CD4-positive, alpha-beta memory T cell (primary cell): ENCODE measurements at regions of chr11 and their contacts with region 1.

Region 1: DNA sequence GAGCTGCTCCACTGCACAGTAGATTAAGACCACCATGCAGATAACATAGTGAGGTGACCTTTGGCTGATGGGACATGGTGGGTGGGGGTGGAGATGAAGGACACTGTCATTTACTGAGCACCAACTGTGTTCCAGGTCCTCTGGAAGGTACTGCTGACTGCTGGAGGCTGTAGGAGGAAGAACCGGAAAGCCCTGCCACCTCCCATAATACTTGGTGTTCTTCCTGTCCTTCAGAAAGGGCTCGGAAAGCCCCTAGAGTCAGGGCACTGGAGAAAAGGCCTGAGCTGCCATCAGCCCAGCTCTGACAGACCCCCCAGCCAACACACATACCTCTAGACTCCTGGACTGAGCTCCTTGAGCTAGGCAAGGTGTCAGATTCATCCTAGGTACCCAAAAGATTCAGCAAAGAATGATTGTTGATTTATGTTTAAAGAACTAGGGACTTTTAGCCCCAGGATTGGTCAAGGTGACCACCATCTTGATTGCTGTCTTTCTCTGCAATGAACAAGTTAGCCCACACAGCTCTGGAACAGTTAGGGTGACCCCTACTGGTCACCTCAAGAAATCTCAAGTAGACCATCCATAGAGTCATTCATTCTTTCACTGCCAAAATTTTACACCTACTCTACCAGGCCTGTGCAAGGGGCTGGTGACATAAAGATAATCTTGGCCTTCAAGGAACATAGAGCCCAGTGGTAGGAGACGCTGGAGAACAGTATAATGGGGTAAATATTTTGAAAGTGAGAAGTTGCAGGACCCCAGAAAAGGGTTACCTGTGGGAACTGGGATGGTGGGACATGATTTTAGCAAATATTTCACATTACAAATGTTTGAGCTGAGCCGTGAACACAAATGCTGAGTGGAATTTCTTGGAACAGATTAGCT is 39.4 kb downstream of the IRAG1 start:
- DNase-seq: peak in 4 of 5 donors; percentile 47 to 53 (median 50)
- H3K4me3 ChIP-seq: no peak overlapping the region
- H3K4me3 Mint-ChIP-seq: no peak overlapping the region
- H3K27ac ChIP-seq: no peak overlapping the region
- H3K27ac Mint-ChIP-seq: peak overlapping the region in 2 of 7 donors; percentile 16 to 41
- H3K4me1 ChIP-seq: no peaks in the 10 kb centered on the region
- H3K4me1 Mint-ChIP-seq: peaks cover 0 to 2% (median under 1%) of the 10 kb centered on the region in 4 donors
- H3K27me3 ChIP-seq: no peaks in the 10 kb centered on the region
- H3K27me3 Mint-ChIP-seq: no peaks in the 10 kb centered on the region

Region 2: GRCh38 chr11:10017911-10018310 is 636.3 kb before region 1 on chr11:
- CTCF ChIA-PET with region 1: no interaction called
- POLR2A ChIA-PET with region 1: no interaction called
- intact Hi-C with region 1: no loop called
- DNase-seq: no peak
- H3K4me3 ChIP-seq: no peak overlapping the region
- H3K4me3 Mint-ChIP-seq: no peak overlapping the region
- H3K27ac ChIP-seq: no peak overlapping the region
- H3K27ac Mint-ChIP-seq: no peak overlapping the region
- H3K4me1 ChIP-seq: peaks cover 8% of the 10 kb centered on the region
- H3K4me1 Mint-ChIP-seq: peaks cover 7 to 15% (median 13%) of the 10 kb centered on the region in 4 donors
- H3K27me3 ChIP-seq: no peaks in the 10 kb centered on the region
- H3K27me3 Mint-ChIP-seq: no peaks in the 10 kb centered on the region

Region 3: GRCh38 chr11:10400856-10401255 is 253.3 kb before region 1 on chr11:
- CTCF ChIA-PET with region 1: interaction called, 90 read pairs
- POLR2A ChIA-PET with region 1: no interaction called
- intact Hi-C with region 1: loop called (anchors 1 kb)
- DNase-seq: no peak
- H3K4me3 ChIP-seq: no peak overlapping the region
- H3K4me3 Mint-ChIP-seq: no peak overlapping the region
- H3K27ac ChIP-seq: no peak overlapping the region
- H3K27ac Mint-ChIP-seq: no peak overlapping the region
- H3K4me1 ChIP-seq: peaks cover 15% of the 10 kb centered on the region
- H3K4me1 Mint-ChIP-seq: peaks cover 10 to 19% (median 14%) of the 10 kb centered on the region in 4 donors
- H3K27me3 ChIP-seq: no peaks in the 10 kb centered on the region
- H3K27me3 Mint-ChIP-seq: peaks cover 0 to 4% of the 10 kb centered on the region in 2 donors

Region 4: GRCh38 chr11:10405855-10406592 is 248.1 kb before region 1 on chr11:
- CTCF ChIA-PET with region 1: interaction called, 260 read pairs
- POLR2A ChIA-PET with region 1: no interaction called
- intact Hi-C with region 1: loop called (anchors 1 kb)
- DNase-seq: peak in 4 of 5 donors; percentile 49 to 54 (median 51)
- H3K4me3 ChIP-seq: no peak overlapping the region
- H3K4me3 Mint-ChIP-seq: no peak overlapping the region
- H3K27ac ChIP-seq: no peak overlapping the region
- H3K27ac Mint-ChIP-seq: peak overlapping the region in 2 of 7 donors; percentile 32 to 58
- H3K4me1 ChIP-seq: peaks cover 17% of the 10 kb centered on the region
- H3K4me1 Mint-ChIP-seq: peaks cover 19 to 51% (median 25%) of the 10 kb centered on the region in 4 donors
- H3K27me3 ChIP-seq: no peaks in the 10 kb centered on the region
- H3K27me3 Mint-ChIP-seq: no peaks in the 10 kb centered on the region

Region 5: GRCh38 chr11:10514210-10514609 is 140.0 kb before region 1 on chr11:
- CTCF ChIA-PET with region 1: interaction called, 10 read pairs
- POLR2A ChIA-PET with region 1: no interaction called
- intact Hi-C with region 1: loop called (anchors 1 kb)
- DNase-seq: no peak
- H3K4me3 ChIP-seq: no peak overlapping the region
- H3K4me3 Mint-ChIP-seq: no peak overlapping the region
- H3K27ac ChIP-seq: no peak overlapping the region
- H3K27ac Mint-ChIP-seq: peak overlapping the region in 3 of 7 donors; percentile 8 to 89 (median 9)
- H3K4me1 ChIP-seq: no peaks in the 10 kb centered on the region
- H3K4me1 Mint-ChIP-seq: peaks cover 0 to 2% (median under 1%) of the 10 kb centered on the region in 4 donors
- H3K27me3 ChIP-seq: no peaks in the 10 kb centered on the region
- H3K27me3 Mint-ChIP-seq: no peaks in the 10 kb centered on the region

Region 6: GRCh38 chr11:10576035-10576398 is 78.2 kb before region 1 on chr11:
- CTCF ChIA-PET with region 1: no interaction called
- POLR2A ChIA-PET with region 1: no interaction called
- intact Hi-C with region 1: no loop called
- DNase-seq: no peak
- H3K4me3 ChIP-seq: no peak overlapping the region
- H3K4me3 Mint-ChIP-seq: no peak overlapping the region
- H3K27ac ChIP-seq: no peak overlapping the region
- H3K27ac Mint-ChIP-seq: no peak overlapping the region
- H3K4me1 ChIP-seq: no peaks in the 10 kb centered on the region
- H3K4me1 Mint-ChIP-seq: no peaks in the 10 kb centered on the region
- H3K27me3 ChIP-seq: no peaks in the 10 kb centered on the region
- H3K27me3 Mint-ChIP-seq: peaks cover 2 to 5% of the 10 kb centered on the region in 2 donors

Region 7: GRCh38 chr11:10669258-10670033 is 15.3 kb after region 1 on chr11:
- CTCF ChIA-PET with region 1: interaction called, 24 read pairs
- POLR2A ChIA-PET with region 1: no interaction called
- intact Hi-C with region 1: no loop called
- DNase-seq: no peak
- H3K4me3 ChIP-seq: no peak overlapping the region
- H3K4me3 Mint-ChIP-seq: no peak overlapping the region
- H3K27ac ChIP-seq: no peak overlapping the region
- H3K27ac Mint-ChIP-seq: no peak overlapping the region
- H3K4me1 ChIP-seq: no peaks in the 10 kb centered on the region
- H3K4me1 Mint-ChIP-seq: peaks cover 0 to 2% (median 0%) of the 10 kb centered on the region in 4 donors
- H3K27me3 ChIP-seq: no peaks in the 10 kb centered on the region
- H3K27me3 Mint-ChIP-seq: peaks cover 14 to 16% of the 10 kb centered on the region in 2 donors

Region 8: GRCh38 chr11:10735481-10736475 is 81.6 kb after region 1 on chr11:
- CTCF ChIA-PET with region 1: interaction called, 9 read pairs
- POLR2A ChIA-PET with region 1: no interaction called
- intact Hi-C with region 1: loop called (anchors 1 kb)
- DNase-seq: peak; percentile 77 to 83 (median 80)
- H3K4me3 ChIP-seq: no peak overlapping the region
- H3K4me3 Mint-ChIP-seq: peak overlapping the region; percentile 36 to 81 (median 64)
- H3K27ac ChIP-seq: no peak overlapping the region
- H3K27ac Mint-ChIP-seq: peak overlapping the region in 5 of 7 donors; percentile 28 to 70 (median 45)
- H3K4me1 ChIP-seq: peaks cover 10% of the 10 kb centered on the region
- H3K4me1 Mint-ChIP-seq: peaks cover 9 to 26% (median 17%) of the 10 kb centered on the region in 4 donors
- H3K27me3 ChIP-seq: no peaks in the 10 kb centered on the region
- H3K27me3 Mint-ChIP-seq: peaks cover 4 to 9% of the 10 kb centered on the region in 2 donors